Posterior vena cava (tissue), 2 donors: ENCODE measurements at regions of chrX and their contacts with region 1.

Region 1: GRCh38 chrX:47193475-47194193 is at the start of gene UBA1:
- DNase-seq: peak; percentile 99
- total RNA-seq, gene UBA1: 151 to 179 TPM

Region 2: DNA sequence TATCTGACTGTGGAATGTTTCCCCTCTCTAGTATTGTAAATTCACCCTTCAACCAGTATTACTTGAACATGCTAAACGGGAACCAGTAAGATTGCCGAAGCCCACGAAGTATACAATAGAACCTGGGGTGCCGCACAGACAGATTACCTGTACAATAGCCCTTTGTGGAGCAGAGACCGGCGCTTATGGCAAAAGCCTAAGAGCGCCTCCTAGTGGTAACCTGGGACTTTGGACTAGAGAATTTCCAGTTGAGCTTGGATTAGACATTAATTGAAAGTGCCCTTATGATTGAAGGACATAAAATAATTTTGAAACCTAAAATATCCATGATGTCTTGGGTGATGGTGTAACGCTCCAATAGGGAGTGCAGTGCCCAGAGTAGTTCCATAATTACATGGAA is 190.9 kb after region 1 on chrX:
- intact Hi-C with region 1: loop called in 1 of 2 experiments (anchors 10 kb)
- DNase-seq: no peak

Region 3: DNA sequence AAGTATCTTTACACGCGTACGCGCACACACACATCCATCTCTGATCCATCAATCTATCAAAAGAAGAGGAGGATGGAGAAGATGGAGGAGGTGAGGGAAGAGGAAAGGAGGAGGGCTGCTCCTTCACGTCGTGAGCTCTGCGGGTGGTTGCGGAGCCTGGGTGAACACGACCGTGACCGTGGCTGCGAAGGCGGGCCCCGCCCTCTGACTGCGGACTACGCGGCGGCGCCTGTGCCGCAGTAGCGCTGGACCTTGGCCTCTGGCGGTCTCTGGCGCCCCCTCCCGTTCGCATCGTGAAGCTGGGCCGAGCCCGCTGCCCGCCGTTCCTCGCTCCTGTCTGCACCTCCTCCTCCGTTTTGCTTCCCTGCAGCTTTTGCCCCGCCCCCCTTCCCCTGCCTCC is 329.7 kb after region 1 on chrX:
- intact Hi-C with region 1: loop called in 1 of 2 experiments (anchors 10 kb)
- DNase-seq: peak; percentile 94

Region 4: GRCh38 chrX:47936224-47936939 is 742.7 kb after region 1 on chrX:
- intact Hi-C with region 1: no loop called
- DNase-seq: no peak